RWPE1 (cell line): ENCODE measurements at regions of chr1 and their contacts with region 1.

Region 1: GRCh38 chr1:225474986-225475820 is 47.4 kb upstream of the LBR start:
- DNase-seq: peak; percentile 85
- H3K27ac ChIP-seq: no peak overlapping the region
- CTCF ChIP-seq: peak; percentile 100

Region 2: DNA sequence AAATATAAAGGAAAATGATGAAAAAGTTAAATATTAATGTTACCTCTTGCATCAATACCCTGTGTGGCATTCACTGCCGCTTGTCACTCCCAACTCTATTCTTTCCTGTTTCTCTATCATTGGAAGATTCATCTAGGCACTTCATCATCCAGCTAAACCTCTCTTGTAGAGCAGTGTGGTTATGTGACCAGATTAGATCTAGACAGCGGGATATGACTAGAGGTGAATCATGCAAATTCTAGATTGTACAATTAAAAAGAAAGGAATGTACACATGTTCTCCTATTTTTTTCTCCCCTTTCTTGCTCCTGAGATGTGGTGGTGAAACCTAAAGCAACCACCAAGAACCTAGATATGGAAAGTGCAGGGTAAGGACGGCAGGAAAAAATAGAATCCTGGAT is 221.4 kb before region 1 on chr1:
- CTCF ChIA-PET with region 1: no interaction called
- POLR2A ChIA-PET with region 1: no interaction called
- DNase-seq: peak; percentile 9
- H3K27ac ChIP-seq: no peak overlapping the region
- CTCF ChIP-seq: no peak

Region 3: DNA sequence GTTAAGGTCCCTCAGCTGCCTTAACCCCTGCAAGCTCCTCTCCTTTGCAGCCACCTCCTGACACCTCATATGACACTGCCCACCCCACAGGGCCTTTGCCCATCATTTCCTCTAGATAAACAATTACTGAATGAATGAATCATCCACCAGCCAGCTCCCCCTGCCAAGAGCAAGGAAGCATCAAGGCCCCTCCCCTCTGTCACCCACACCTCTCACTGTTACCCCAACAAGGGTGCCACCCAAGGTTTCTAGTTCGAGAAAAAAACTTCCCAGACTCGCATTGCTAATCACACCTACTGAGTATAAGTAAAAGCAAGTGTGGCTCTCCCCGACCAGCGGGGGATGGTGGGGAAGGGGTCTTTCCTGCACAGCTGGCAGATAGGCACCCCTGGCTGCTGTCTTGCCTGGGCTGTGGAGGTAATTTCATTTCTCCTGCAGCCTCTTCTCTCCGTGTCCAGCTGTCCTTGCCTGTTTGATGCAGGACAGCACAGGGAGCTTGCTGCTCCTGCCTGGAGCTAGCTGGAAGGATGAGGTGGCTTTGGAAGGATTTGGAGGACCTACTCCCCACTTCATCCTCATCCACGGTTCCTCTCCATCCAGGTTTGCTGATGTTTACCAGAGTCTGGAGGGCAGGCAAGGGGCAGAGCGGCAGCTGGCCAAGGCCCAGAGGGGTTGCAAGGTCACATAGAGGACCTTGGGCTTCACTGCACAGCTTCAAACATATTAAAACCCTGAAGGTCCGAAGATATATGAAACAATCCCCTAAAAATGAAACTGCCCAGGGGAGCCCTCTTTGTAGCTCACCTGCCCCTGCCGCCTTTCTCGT is 14.3 kb before region 1 on chr1:
- CTCF ChIA-PET with region 1: interaction called, 27 read pairs
- POLR2A ChIA-PET with region 1: no interaction called
- DNase-seq: no peak
- H3K27ac ChIP-seq: peak overlapping the region; percentile 62
- CTCF ChIP-seq: no peak

Region 4: GRCh38 chr1:225772323-225772768 is 297.1 kb after region 1 on chr1:
- CTCF ChIA-PET with region 1: interaction called, 39 read pairs
- POLR2A ChIA-PET with region 1: interaction called, 3 read pairs
- DNase-seq: peak; percentile 95
- H3K27ac ChIP-seq: peak overlapping the region; percentile 38
- CTCF ChIP-seq: peak; percentile 89

Region 5: GRCh38 chr1:225845571-225846259 is 370.5 kb after region 1 on chr1:
- CTCF ChIA-PET with region 1: interaction called, 25 read pairs
- POLR2A ChIA-PET with region 1: no interaction called
- DNase-seq: peak; percentile 86
- H3K27ac ChIP-seq: peak overlapping the region; percentile 42
- CTCF ChIP-seq: peak; percentile 72

Region 6: DNA sequence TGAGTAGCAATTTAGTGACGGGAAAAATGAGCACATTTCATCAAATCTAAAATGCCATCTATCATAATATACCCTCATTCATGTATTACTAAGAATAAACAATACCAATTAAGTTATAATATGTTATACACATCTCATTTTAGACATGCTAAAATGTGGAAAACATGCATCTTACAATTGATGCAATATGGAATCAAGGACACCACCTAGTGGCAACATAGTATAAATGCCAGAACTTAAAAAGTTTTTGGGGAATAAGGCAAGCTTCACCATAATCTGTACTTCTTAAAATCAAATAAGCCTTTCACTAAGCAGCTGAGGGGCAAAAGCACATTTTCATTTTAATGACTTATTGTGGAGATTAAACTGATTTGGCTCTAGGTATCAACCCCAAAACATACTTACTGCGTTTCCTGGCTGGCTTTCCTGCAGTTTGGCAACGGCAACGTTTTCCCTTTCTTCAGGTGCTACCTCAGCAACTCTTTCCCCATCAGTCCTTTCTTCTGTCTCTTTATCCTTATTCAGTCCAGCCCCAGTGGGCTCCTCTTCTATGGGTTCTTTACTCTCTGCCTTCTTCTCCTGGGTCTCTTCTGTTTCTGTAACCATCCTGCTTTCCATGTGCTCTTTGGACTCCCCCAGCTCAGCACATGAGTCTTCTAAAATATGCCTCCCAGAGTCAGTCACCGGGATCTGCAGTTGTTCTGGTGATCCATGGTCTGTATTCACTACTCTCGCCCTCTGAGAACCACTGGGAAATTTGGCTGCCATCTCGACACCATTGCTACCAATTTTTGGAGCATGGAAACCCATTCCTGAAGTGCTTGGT is 512.5 kb after region 1 on chr1:
- CTCF ChIA-PET with region 1: interaction called, 26 read pairs
- POLR2A ChIA-PET with region 1: no interaction called
- DNase-seq: peak; percentile 56
- H3K27ac ChIP-seq: peak overlapping the region; percentile 15; the same call in 1 of the 2 replicates
- CTCF ChIP-seq: peak; percentile 80

Region 7: DNA sequence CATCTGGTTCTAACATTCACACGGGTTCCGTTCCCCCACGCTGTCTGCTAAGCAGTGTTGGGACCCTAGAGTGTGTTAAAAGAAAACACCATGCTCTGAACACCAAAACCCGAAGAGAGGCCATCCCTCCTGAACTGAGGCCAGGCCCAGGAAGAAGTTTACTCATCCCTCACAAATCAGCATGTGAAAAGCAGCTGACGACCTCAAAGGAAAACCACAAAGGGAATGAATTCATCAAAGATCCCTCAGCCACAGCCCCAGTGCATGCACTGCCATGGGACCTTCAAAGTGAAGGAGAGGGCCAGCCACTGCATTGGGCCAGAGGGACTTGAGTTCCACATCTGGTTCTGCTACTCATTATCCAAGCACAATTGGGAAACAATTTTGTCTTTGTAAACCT is 1388.2 kb after region 1 on chr1:
- CTCF ChIA-PET with region 1: no interaction called
- POLR2A ChIA-PET with region 1: no interaction called
- DNase-seq: no peak
- H3K27ac ChIP-seq: no peak overlapping the region
- CTCF ChIP-seq: no peak